Endothelial cell of umbilical vein (primary cell): ENCODE measurements at regions of chr1 and their contacts with region 1.

Region 1: DNA sequence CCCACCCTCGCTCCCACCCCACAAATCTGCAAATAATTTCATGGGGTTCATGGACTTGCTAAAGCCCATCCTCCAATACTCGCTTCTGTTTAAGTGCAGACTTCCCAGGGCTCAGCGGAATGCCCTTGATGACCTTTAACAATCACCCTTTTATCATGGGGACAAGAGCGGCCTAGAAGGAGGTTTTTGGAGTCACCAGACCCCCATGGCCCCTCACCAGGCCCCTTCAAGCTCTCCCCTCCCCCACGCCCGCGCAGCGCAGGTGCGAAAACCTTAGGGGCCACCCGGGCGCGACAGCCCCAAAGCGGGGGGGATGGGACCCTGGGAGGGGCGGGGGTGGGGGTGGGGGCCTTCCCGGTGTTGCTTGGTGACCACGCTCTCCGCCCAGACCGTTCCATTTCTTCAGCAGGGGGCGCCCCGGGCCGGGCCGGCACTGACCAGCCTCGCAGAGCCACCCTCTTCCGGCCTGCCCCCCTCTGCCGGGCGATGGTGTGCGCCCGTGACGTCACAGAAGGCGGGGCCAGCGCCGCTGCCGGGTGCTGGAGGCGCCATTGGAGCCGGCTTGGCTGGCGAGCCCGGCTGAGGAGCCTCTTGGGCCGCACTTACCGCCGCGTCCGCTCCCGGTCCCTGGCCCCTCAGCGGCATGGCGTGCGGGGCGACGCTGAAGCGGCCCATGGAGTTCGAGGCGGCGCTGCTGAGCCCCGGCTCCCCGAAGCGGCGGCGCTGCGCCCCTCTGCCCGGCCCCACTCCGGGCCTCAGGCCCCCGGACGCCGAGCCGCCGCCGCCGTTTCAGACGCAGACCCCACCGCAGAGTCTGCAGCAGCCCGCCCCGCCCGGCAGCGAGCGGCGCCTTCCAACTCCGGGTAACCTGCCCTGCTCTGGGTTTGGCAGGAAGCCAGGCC is at the start of gene AKIRIN1:
- DNase-seq: peak; percentile 97
- H3K4me3 ChIP-seq: peak within 1 kb of the TSS; percentile 67 to 83 (median 82)
- H3K27ac ChIP-seq: peak within 1 kb of the TSS; percentile 85
- H3K4me1 ChIP-seq: peaks cover 27% of the 10 kb centered on the region
- H3K27me3 ChIP-seq: no peaks in the 10 kb centered on the region
- CTCF ChIP-seq: no peak
- POLR2A ChIP-seq: peak; percentile 95
- total RNA-seq, gene AKIRIN1: 43.4 and 49.3 TPM in 2 replicates

Region 2: DNA sequence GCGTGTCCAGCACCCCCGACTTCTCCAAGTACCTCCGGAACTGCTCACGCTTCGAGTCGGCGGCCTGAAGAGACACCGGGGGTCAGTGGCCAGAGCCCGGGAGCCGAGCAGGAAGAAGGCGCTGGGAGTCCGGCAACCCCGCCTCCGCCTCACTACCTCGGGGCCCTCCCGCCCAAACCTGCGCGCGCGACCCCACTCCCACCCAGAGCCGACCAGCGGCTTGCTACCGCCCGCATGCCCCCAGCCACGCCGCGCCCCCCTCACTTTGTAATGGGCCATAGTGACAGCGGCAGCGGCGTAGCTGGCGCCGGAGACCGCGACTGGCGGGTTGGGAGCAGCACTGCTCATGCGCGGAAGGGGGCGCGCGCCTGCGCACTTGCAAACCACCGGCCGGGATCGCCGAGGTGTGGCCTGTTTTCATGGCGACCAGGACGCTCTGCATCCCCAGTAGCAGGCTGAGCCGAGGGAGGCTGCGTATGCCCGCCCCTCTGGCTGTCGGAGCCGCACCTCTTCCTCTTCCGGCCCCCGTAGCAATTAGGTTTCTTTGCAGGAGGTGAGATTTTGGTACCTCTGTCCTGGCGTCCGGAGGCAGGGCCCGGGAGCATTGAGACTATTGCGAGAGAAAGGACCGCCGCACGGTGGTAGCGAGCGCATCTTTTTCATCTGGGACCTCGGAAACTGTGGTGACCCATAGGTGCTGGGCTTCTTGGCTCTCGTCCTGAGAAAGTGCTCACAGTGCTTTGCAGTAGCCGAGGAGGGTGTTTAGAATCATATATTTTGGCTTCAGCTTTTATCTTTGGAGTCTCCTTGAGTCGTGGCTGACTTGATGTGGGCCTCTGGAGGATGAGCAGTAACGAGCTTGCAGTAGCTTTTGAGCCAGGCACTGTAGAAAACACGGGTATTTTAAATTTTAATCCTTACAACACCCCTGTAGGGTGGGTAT is 117.7 kb before region 1 on chr1 and contains the start of gene MYCBP:
- CTCF ChIA-PET with region 1: no interaction called
- POLR2A ChIA-PET with region 1: no interaction called
- dilution Hi-C with region 1: no loop called
- intact Hi-C with region 1: loop called (anchors 1 kb)
- DNase-seq: peak; percentile 98
- H3K4me3 ChIP-seq: peak within 1 kb of the TSS; percentile 74 to 86 (median 83)
- H3K27ac ChIP-seq: peak within 1 kb of the TSS; percentile 12
- H3K4me1 ChIP-seq: peaks cover 12% of the 10 kb centered on the region
- H3K27me3 ChIP-seq: no peaks in the 10 kb centered on the region
- CTCF ChIP-seq: no peak
- POLR2A ChIP-seq: peak; percentile 89
- total RNA-seq, gene MYCBP: 13.1 and 23.1 TPM in 2 replicates

Region 3: GRCh38 chr1:39026051-39026865 is 35.3 kb after region 1 on chr1 and contains the start of gene NDUFS5:
- CTCF ChIA-PET with region 1: no interaction called
- POLR2A ChIA-PET with region 1: no interaction called
- dilution Hi-C with region 1: no loop called
- intact Hi-C with region 1: loop called (anchors 1 kb)
- DNase-seq: peak; percentile 88
- H3K4me3 ChIP-seq: peak within 1 kb of the TSS; percentile 45 to 86 (median 60)
- H3K27ac ChIP-seq: peak within 1 kb of the TSS; percentile 89
- H3K4me1 ChIP-seq: peaks cover 7% of the 10 kb centered on the region
- H3K27me3 ChIP-seq: no peaks in the 10 kb centered on the region
- CTCF ChIP-seq: no peak
- POLR2A ChIP-seq: peak; percentile 95
- total RNA-seq, gene NDUFS5: 325 and 327 TPM in 2 replicates

Region 4: DNA sequence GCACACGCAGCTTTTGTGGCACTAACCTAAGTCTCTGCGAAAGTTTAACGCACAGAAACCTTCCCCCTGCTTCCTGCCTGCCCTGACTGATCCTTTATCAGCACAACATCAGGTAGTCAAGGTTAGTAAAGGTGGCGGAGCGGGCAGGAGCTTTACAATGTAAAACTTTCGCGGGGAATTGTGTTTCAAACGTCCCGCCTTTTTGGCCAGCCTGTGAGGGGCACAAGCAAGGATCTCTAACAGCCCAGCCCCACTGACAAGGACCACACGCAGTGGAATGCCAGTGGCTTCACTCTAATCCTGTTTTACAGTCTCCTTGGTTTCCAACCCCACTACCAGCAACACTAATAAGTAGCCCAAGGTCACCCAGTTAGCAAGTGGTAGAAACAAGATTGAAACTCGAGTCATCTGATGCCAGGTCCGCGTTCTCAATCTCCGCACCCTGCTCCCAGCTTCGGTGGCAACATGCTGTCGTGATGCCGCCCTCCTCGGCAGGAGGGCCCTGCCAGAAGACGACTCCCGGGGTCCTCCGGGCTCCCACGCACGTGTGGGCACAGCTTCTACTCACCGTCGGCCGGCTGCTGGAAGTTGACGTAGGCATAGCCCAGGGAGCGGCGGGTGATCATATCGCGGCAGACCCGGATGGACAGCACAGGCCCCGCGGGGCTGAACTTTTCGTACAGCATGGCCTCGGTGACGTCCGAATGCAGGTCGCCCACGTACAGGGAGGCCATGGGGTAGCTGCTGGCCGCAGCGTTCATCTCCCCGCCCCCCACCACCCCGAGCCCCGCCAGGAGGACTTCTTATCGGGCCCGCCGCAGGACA is 584.4 kb after region 1 on chr1:
- CTCF ChIA-PET with region 1: no interaction called
- POLR2A ChIA-PET with region 1: no interaction called
- dilution Hi-C with region 1: no loop called
- intact Hi-C with region 1: loop called (anchors 5 kb)
- DNase-seq: peak; percentile 49
- H3K4me3 ChIP-seq: peak overlapping the region; percentile 5 to 94 (median 80)
- H3K27ac ChIP-seq: peak overlapping the region; percentile 67
- H3K4me1 ChIP-seq: peaks cover 27% of the 10 kb centered on the region
- H3K27me3 ChIP-seq: no peaks in the 10 kb centered on the region
- CTCF ChIP-seq: no peak
- POLR2A ChIP-seq: no peak